Heart right ventricle (tissue), 16 donors: ENCODE measurements at regions of chr1 and their contacts with region 1.

Region 1: GRCh38 chr1:184622136-184622823 is 132.4 kb downstream of the EDEM3 start:
- DNase-seq: peak; percentile 65 to 77
- ATAC-seq: peak; percentile 75 to 91 (median 84)
- H3K4me3 ChIP-seq: peak overlapping the region in 1 of 10 donors; percentile 4
- H3K27ac ChIP-seq: peak overlapping the region; percentile 41 to 94 (median 78)
- H3K4me1 ChIP-seq: peaks cover 14 to 72% (median 69%) of the 10 kb centered on the region in 9 donors
- H3K27me3 ChIP-seq: no peaks in the 10 kb centered on the region
- CTCF ChIP-seq: peak in 3 of 9 donors; percentile 8 to 32 (median 16)

Region 2: GRCh38 chr1:183841550-183841949 is 780.7 kb before region 1 on chr1:
- intact Hi-C with region 1: no loop called
- DNase-seq: no peak
- ATAC-seq: no peak
- H3K4me3 ChIP-seq: no peak overlapping the region
- H3K27ac ChIP-seq: peak overlapping the region in 8 of 10 donors; percentile 41 to 84 (median 58)
- H3K4me1 ChIP-seq: peaks cover 3 to 72% (median 44%) of the 10 kb centered on the region in 9 donors
- H3K27me3 ChIP-seq: no peaks in the 10 kb centered on the region
- CTCF ChIP-seq: no peak

Region 3: GRCh38 chr1:184483101-184483683 is 139.1 kb before region 1 on chr1:
- intact Hi-C with region 1: loop called in 1 of 10 experiments (anchors 10 kb)
- DNase-seq: peak in 1 of 2 donors; percentile 39
- ATAC-seq: peak in 7 of 8 donors; percentile 13 to 60 (median 39)
- H3K4me3 ChIP-seq: no peak overlapping the region
- H3K27ac ChIP-seq: peak overlapping the region; percentile 41 to 88 (median 64)
- H3K4me1 ChIP-seq: peaks cover 29 to 86% (median 71%) of the 10 kb centered on the region in 9 donors
- H3K27me3 ChIP-seq: no peaks in the 10 kb centered on the region
- CTCF ChIP-seq: peak in 5 of 9 donors; percentile 15 to 45 (median 30)

Region 4: GRCh38 chr1:184535191-184535970 is 86.9 kb before region 1 on chr1:
- intact Hi-C with region 1: loop called in 1 of 10 experiments (anchors 5 kb)
- DNase-seq: no peak
- ATAC-seq: peak; percentile 45 to 82 (median 70)
- H3K4me3 ChIP-seq: no peak overlapping the region
- H3K27ac ChIP-seq: peak overlapping the region; percentile 41 to 82 (median 70)
- H3K4me1 ChIP-seq: peaks cover 0 to 61% (median 42%) of the 10 kb centered on the region in 9 donors
- H3K27me3 ChIP-seq: no peaks in the 10 kb centered on the region
- CTCF ChIP-seq: no peak